ENCODE measurements at regions of chr11 and their contacts with region 1.

Region 1: DNA sequence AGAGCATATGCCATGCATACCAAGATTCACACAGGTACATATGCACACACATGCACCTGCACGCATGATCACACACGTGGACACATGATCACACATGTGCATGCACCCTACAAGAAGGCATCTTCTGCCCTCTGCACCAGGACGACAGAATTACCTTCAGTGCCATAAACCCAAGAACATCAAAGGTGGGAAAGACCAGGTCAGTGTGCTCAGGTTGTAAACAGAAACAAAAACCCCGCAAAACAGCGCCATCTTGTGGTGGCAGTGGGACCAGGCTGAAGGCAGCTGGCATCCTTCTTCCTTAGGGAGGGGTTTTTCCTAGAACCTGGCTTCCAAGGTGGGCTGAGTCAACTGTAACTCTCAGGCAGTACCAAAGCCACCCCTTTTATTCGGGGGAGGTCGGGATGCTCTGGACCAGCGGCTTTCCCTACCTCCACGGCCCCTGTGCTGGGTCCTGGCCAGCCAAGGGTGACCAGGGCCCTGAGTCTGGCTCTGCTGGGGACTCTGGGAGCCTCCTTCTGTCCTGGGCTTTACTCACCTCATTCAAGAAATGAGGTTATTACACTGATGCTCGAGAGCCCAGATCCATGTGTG is 69.4 kb upstream of the FGF3 start:
- DNase-seq: peak; percentile 84
- CTCF ChIP-seq: peak; percentile 84

Region 2: GRCh38 chr11:69683764-69684333 is 204.7 kb before region 1 on chr11:
- CTCF ChIA-PET with region 1: interaction called, 10 read pairs
- POLR2A ChIA-PET with region 1: no interaction called
- DNase-seq: no peak
- CTCF ChIP-seq: no peak

Region 3: DNA sequence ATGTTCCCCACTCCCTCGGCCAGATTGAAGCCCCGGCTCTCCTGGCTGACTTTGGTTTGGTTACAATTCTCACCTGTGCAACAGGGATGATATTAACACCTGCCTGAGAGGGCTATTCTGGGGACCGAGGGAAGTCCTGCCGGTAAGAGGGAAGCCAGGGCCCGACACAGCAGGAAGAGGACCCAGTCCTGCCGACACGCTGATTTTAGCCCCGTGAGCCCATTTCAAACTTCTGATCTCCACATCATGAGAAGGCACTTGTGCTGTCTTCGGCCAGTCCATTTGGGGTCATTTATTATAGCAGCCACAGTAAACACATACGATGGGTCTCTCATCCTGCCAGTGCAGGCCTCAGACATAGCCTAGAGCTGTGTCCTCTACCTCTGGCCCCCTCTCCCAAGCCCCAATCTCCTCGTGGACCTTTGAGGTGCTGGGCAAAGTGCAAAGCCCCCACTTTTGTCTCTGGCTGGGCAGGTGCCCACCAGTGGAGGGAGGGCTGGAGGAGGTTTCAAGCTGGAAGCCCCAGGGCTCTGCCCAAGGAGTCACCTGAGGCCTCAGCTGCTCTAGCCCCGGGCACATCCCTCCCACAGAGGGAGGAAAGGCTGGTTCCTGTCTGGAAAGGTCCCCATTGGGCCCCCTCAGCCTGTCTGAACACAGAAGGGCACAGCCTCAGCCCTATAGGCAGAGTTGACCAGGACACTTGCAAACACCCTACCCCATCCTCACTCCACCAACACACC is 10.3 kb before region 1 on chr11:
- CTCF ChIA-PET with region 1: interaction called, 11 read pairs
- POLR2A ChIA-PET with region 1: no interaction called
- DNase-seq: no peak
- CTCF ChIP-seq: no peak

Measured in GM10248 (cell line).